Brain microvascular endothelial cell (primary cell): ENCODE measurements at regions of chr10 and their contacts with region 1.

Region 1: DNA sequence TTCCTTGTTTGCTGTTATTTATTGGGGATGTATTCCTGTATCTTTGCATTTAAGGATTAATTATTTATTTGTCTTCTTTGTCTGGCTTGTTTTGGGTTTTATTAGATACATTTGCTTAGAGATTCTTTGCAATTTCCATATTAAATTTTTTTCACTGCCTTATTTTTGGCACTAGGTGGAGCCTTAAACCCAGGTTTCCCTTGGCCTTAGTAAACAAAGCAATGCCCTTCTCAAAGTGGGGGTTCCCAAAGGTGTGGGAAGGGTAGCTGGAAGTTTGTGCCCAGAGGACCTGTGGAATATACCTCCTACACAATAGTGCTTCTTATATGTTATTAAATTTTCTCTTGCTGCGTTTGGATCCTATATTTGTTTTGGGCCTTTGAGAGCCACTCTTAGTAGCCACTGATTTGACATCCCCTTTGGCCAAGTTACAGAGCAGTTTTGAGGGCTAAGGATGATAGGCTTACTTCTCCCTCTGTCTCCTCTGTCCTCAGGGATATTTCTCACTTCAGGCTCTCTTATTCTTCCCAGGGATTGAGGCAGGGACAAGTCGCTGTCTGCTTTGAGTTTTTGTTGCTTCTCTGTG is 162.3 kb downstream of the ITGB1 start:
- DNase-seq: no peak
- H3K4me3 ChIP-seq: no peak overlapping the region
- H3K27ac ChIP-seq: no peak overlapping the region
- H3K27me3 ChIP-seq: no peaks in the 10 kb centered on the region
- CTCF ChIP-seq: peak; percentile 66

Region 2: GRCh38 chr10:33008499-33009243 is 213.0 kb after region 1 on chr10:
- in situ Hi-C with region 1: loop called (anchors 25 kb)
- DNase-seq: peak; percentile 84
- H3K4me3 ChIP-seq: no peak overlapping the region
- H3K27ac ChIP-seq: peak overlapping the region; percentile 61
- H3K27me3 ChIP-seq: no peaks in the 10 kb centered on the region
- CTCF ChIP-seq: peak; percentile 92